Breast epithelium (tissue), 4 donors: ENCODE measurements at regions of chrX and their contacts with region 1.

Region 1: DNA sequence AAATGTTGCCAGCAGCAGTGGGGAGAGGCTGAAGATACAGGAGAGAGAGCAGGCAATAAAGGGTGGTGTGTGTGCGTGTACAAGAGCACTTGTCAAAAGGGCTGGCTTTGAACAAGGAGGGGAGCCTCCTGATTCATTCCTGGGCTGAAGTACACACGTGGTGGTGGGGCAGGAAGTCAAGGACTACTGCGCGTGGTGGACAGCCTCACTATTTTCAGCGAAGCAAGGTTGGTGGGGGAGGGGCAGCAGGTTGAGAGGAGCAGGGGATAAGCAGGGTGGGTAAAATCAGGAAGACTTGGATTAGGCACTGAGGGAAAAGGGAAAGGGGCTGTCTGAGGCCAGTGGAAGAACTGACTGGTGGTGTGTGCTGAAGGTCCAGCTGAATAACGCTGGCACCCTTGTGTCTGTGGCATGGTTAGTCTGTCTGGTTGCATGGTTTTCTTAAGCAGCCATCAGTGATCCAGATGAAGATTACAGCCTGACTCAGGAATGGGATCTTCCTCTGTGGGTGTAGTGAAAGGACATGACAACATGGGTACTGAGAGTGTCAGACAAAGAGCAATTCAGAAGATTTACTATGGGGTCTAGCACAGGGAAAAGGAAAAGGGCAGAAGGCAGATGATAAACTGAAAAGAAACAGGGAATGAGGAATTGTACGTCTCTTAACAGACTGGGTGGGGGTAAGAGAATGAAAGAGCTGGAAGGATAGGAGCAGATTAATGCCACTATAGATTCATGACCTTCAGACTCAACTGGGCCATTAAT is 149.8 kb downstream of the CHM start:
- DNase-seq: no peak
- H3K4me3 ChIP-seq: no peak overlapping the region
- H3K27ac ChIP-seq: no peak overlapping the region
- H3K4me1 ChIP-seq: no peaks in the 10 kb centered on the region
- H3K27me3 ChIP-seq: peaks cover 0 to 6% of the 10 kb centered on the region in 2 donors
- CTCF ChIP-seq: no peak
- POLR2A ChIP-seq: no peak

Region 2: DNA sequence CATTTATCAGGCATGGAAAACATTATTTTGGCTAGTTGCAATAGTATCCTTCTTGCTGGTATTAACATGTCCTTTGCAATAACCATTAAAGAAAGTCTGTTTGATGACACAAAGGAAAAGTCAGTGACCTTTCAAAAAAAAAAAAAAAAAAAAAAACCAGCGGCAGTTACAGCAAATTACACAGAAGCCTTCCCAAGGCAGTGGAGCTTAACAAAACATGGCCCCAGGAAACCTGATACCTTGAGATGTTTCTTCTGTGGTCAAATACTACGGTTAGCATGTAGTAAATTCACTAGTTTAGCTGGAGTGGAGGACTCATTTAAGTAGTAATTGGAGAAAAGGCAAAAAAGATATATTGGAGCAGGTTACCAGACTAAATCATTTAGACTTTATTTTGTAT is 609.8 kb after region 1 on chrX:
- intact Hi-C with region 1: loop called (anchors 5 kb)
- DNase-seq: no peak
- H3K4me3 ChIP-seq: no peak overlapping the region
- H3K27ac ChIP-seq: no peak overlapping the region
- H3K4me1 ChIP-seq: no peaks in the 10 kb centered on the region
- H3K27me3 ChIP-seq: peaks cover 0 to 23% of the 10 kb centered on the region in 2 donors
- CTCF ChIP-seq: no peak
- POLR2A ChIP-seq: no peak